Activated T-helper 2 cell treated with anti-CD3 and anti-CD28 coated beads, Interferon-gamma antibody, Interleukin-2, Interleukin-4, amounts not matched to agents 10 μg/mL and 5 μg/mL and 100 μg/mL, durations not matched to agents 14 hours and 24 hours and 36 hours (primary cell): ENCODE measurements at regions of chr2 and their contacts with region 1.

Region 1: DNA sequence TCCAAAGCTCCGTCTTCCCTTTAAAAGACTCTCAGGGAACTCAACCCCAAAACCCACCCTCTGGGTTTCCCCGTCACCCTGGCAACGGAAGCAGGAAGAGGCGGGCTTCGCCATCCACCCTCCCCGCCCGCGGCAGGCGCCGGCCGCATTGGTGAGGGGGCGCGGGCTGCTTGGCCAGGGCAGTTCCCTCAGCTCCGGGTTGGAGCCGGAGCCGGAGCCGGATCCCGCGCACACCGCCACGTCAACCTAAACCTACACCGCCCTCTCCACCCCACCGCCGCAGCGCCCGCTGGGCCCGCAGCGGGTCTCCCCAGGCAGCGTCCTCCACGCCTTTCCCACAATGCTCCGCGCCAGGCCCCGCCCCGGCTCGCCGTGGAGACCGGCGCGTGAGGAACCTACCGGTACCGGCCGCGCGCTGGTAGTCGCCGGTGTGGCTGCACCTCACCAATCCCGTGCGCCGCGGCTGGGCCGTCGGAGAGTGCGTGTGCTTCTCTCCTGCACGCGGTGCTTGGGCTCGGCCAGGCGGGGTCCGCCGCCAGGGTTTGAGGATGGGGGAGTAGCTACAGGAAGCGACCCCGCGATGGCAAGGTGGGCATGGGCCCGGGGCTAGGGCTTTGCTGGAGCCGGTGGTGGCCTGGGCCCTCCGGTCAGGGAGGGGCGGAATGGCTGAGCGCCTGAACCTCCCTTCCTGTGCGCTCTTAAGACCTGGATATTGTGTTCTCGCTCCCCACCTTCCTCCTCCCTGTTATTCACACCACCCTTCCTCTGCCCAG is at the start of gene DNAJC10:
- DNase-seq: peak; percentile 84
- H3K4me3 Mint-ChIP-seq: no peak within 1 kb of the TSS
- H3K27ac Mint-ChIP-seq: no peak within 1 kb of the TSS
- H3K4me1 Mint-ChIP-seq: peaks cover 5% of the 10 kb centered on the region
- H3K27me3 Mint-ChIP-seq: peaks cover 16% of the 10 kb centered on the region
- total RNA-seq, gene DNAJC10: 63.5 and 64.6 TPM in 2 replicates

Region 2: GRCh38 chr2:182883451-182883850 is 167.4 kb after region 1 on chr2:
- intact Hi-C with region 1: no loop called
- DNase-seq: no peak
- H3K4me3 Mint-ChIP-seq: no peak overlapping the region
- H3K27ac Mint-ChIP-seq: no peak overlapping the region
- H3K4me1 Mint-ChIP-seq: no peaks in the 10 kb centered on the region
- H3K27me3 Mint-ChIP-seq: peaks cover 1% of the 10 kb centered on the region

Region 3: DNA sequence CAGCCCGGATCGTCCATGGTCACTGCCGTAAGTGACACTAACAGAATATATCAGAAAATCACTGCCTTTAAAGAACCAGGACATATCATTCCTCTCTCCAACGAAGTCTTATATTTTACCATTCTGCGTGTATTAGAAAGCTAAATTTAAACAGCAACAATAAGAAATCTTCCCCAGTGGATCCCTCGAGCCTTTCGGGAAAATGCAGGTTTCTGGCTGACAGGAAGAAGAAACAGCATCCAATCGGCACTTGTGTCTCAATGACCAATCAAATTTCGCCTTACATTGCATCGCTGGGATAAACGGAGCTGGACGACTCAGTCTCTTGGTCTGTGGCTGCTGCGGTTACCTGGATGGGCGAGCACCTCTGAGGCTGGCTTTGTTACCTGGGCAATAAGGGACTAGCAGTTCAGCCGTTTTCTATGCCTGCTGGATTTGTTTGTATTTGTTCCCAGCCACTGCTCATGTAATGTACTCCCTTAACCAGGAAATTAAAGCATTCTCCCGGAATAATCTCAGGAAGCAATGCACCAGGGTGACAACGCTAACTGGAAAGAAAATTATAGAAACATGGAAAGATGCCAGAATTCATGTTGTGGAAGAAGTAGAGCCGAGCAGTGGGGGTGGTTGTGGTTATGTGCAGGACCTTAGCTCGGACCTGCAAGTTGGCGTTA is 362.5 kb after region 1 on chr2 and contains the start of gene DUSP19:
- intact Hi-C with region 1: loop called (anchors 5 kb)
- DNase-seq: peak; percentile 72
- H3K4me3 Mint-ChIP-seq: peak within 1 kb of the TSS; percentile 83
- H3K27ac Mint-ChIP-seq: peak within 1 kb of the TSS; percentile 21
- H3K4me1 Mint-ChIP-seq: peaks cover 7% of the 10 kb centered on the region
- H3K27me3 Mint-ChIP-seq: peaks cover 7% of the 10 kb centered on the region
- total RNA-seq, gene DUSP19: 1.6 and 1.9 TPM in 2 replicates